Dorsolateral prefrontal cortex (tissue), 120 donors: ENCODE measurements at regions of chr4 and their contacts with region 1.

Region 1: GRCh38 chr4:98928505-98929340 is at the start of gene EIF4E:
- DNase-seq: peak; percentile 88 to 97 (median 94)
- H3K4me3 ChIP-seq: peak within 1 kb of the TSS; percentile 70 to 98 (median 90)
- H3K27ac ChIP-seq: peak within 1 kb of the TSS; percentile 76 to 99 (median 95)
- H3K27me3 ChIP-seq: no peaks in the 10 kb centered on the region
- CTCF ChIP-seq: peak in 23 of 56 donors; percentile 1 to 62 (median 13)
- total RNA-seq, gene EIF4E: 56.2 to 162 (median 97.3) TPM

Region 2: GRCh38 chr4:98260579-98261290 is 668.0 kb before region 1 on chr4:
- intact Hi-C with region 1: loop called (anchors 2 to 10 kb)
- DNase-seq: peak; percentile 84 to 96 (median 92)
- H3K4me3 ChIP-seq: peak overlapping the region; percentile 67 to 96 (median 88)
- H3K27ac ChIP-seq: peak overlapping the region; percentile 89 to 99 (median 98)
- H3K27me3 ChIP-seq: no peaks in the 10 kb centered on the region
- CTCF ChIP-seq: peak in 12 of 56 donors; percentile 1 to 19 (median 10)

Region 3: DNA sequence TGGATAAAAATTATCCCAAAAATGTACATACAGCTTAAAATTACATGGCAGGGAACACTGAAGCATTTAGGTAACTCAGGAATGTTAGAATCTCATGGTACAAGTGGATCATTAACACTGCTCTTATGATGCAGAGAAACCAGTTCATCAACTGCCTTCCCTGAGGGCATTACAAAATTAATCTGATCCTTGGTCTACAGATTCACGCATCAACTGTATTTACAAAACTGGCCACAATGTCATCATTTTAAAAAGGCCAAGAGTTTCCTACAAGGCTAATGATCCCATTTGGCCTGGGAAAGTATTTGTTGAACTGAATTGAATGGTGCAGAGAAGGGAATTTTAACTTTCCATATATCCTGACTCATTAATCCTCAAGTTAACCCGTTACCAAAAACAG is 354.9 kb before region 1 on chr4:
- intact Hi-C with region 1: loop called in 1 of 2 experiments (anchors 10 kb)
- DNase-seq: no peak
- H3K4me3 ChIP-seq: no peak overlapping the region
- H3K27ac ChIP-seq: peak overlapping the region in 18 of 59 donors; percentile 1 to 96 (median 18)
- H3K27me3 ChIP-seq: no peaks in the 10 kb centered on the region
- CTCF ChIP-seq: no peak

Region 4: GRCh38 chr4:98786866-98787265 is 141.9 kb before region 1 on chr4:
- intact Hi-C with region 1: loop called in 1 of 2 experiments (anchors 5 kb)
- DNase-seq: no peak
- H3K4me3 ChIP-seq: peak overlapping the region in 3 of 59 donors; percentile 6 to 45 (median 43)
- H3K27ac ChIP-seq: no peak overlapping the region
- H3K27me3 ChIP-seq: no peaks in the 10 kb centered on the region
- CTCF ChIP-seq: peak in 47 of 56 donors; percentile 13 to 69 (median 40)

Region 5: DNA sequence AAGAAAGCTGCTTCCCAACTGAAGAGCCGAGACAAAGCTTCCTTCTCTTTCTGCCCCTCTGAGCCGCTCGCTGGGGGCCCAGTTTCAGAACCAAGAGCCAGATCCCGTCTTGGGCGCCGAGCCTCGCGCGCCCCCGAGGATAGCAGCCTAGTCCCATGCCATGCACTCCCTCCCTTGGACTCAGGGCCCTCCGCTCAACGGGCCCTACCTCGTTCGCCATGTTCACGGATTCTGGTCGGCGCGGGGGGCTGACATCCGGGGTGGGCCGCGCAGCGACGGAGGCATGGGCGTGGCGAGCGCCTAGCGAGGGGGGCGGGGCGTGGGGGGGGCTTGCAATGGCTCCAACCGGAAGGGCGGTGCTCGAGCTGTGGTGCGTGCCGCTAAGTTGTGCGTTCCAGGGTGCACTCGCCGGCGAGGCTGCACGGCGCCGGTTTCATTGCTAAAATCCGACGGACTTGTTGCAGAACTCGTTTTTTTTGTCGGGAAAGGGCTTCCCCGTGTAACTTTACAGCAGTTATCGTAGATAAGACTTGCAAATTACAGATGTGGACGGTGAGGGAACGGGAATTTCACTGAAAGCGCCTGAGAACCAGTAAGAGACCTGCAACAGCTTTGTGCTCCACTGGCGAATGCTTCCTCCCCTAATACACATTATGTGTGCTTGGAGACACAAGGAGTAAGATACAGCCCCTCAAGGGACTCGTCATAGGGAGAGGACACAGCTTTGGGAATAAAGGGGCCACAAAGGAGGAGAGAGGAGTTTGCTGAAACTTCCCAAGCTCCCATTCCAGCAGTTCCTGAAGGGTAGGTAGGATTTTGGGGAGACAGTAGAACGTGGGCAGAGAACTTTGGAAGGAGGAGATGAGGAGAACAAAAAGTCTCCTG is 160.0 kb after region 1 on chr4 and contains the start of gene ADH5:
- intact Hi-C with region 1: loop called in 1 of 2 experiments (anchors 10 kb)
- DNase-seq: peak; percentile 61 to 86 (median 80)
- H3K4me3 ChIP-seq: peak within 1 kb of the TSS; percentile 52 to 91 (median 79)
- H3K27ac ChIP-seq: peak within 1 kb of the TSS; percentile 52 to 96 (median 89)
- H3K27me3 ChIP-seq: no peaks in the 10 kb centered on the region
- CTCF ChIP-seq: peak in 12 of 56 donors; percentile 5 to 27 (median 12)
- total RNA-seq, gene ADH5: 53.3 to 92.9 (median 74.8) TPM